ENCODE measurements at regions of chr1 and their contacts with region 1.

Region 1: GRCh38 chr1:223748773-223749733 is 36.7 kb downstream of the CAPN2 start:
- DNase-seq: peak; percentile 65
- ATAC-seq: peak; percentile 87
- H3K4me3 Mint-ChIP-seq: peak overlapping the region; percentile 56
- H3K27ac Mint-ChIP-seq: no peak overlapping the region
- H3K4me1 Mint-ChIP-seq: peaks cover 15% of the 10 kb centered on the region
- H3K27me3 Mint-ChIP-seq: no peaks in the 10 kb centered on the region

Region 2: DNA sequence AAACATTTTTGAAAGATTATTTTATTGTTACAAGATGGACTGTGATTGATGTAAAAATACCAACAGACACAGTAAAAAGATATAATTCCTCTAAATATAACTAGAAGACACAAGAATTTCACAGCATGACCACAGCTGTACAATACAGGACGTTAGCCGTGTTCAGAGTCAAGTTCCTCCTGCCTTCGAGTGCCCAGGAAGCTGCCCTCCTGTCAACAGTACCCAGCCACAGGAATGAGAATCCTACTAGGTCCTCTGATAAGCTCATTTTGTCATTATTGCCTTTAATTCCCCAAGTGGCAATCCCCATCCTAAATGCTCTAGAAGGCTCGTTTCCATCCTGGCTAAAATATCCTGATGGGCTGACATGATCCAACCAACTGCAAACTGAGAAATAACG is 53.1 kb before region 1 on chr1:
- CTCF ChIA-PET with region 1: interaction called, 99 read pairs
- POLR2A ChIA-PET with region 1: interaction called, 3 read pairs
- DNase-seq: no peak
- ATAC-seq: no peak
- H3K4me3 Mint-ChIP-seq: no peak overlapping the region
- H3K27ac Mint-ChIP-seq: no peak overlapping the region
- H3K4me1 Mint-ChIP-seq: peaks cover 4% of the 10 kb centered on the region
- H3K27me3 Mint-ChIP-seq: peaks cover 2% of the 10 kb centered on the region

Region 3: DNA sequence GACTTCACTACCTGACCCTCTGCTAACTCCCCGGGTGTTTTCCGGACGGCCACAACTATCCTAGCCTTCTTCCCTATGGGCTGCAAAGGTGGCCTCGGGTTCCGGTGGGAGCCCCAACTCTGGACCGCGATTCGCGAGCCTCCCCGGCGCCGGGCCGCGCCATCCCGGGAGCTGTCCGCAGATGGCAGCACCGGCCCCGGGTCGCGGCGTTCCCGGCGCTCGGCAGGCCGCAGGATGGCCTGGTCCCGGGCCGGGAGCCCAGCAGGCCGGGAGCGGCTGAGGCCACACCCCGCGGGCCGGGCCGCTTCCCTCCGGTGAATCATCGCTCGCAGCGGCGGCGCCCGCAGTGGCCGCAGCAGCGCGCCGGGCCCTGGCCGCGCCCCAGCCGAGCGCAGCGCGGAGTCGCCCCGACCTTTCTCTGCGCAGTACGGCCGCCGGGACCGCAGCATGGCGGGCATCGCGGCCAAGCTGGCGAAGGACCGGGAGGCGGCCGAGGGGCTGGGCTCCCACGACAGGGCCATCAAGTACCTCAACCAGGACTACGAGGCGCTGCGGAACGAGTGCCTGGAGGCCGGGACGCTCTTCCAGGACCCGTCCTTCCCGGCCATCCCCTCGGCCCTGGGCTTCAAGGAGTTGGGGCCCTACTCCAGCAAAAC is 36.7 kb before region 1 on chr1 and contains the start of gene CAPN2:
- CTCF ChIA-PET with region 1: interaction called, 58 read pairs
- POLR2A ChIA-PET with region 1: interaction called, 8 read pairs
- DNase-seq: peak; percentile 65
- ATAC-seq: peak; percentile 63
- H3K4me3 Mint-ChIP-seq: peak within 1 kb of the TSS; percentile 80
- H3K27ac Mint-ChIP-seq: peak within 1 kb of the TSS; percentile 88
- H3K4me1 Mint-ChIP-seq: peaks cover 51% of the 10 kb centered on the region
- H3K27me3 Mint-ChIP-seq: no peaks in the 10 kb centered on the region
- total RNA-seq, gene CAPN2: 176 to 178 TPM

Region 4: GRCh38 chr1:223732992-223733798 is 15.9 kb before region 1 on chr1:
- CTCF ChIA-PET with region 1: interaction called, 52 read pairs
- POLR2A ChIA-PET with region 1: interaction called, 4 read pairs
- DNase-seq: no peak
- ATAC-seq: no peak
- H3K4me3 Mint-ChIP-seq: no peak overlapping the region
- H3K27ac Mint-ChIP-seq: no peak overlapping the region
- H3K4me1 Mint-ChIP-seq: peaks cover 30% of the 10 kb centered on the region
- H3K27me3 Mint-ChIP-seq: no peaks in the 10 kb centered on the region

Region 5: GRCh38 chr1:223759273-223759672 is 10.2 kb after region 1 on chr1:
- CTCF ChIA-PET with region 1: interaction called, 13 read pairs
- POLR2A ChIA-PET with region 1: no interaction called
- DNase-seq: no peak
- ATAC-seq: no peak
- H3K4me3 Mint-ChIP-seq: no peak overlapping the region
- H3K27ac Mint-ChIP-seq: no peak overlapping the region
- H3K4me1 Mint-ChIP-seq: no peaks in the 10 kb centered on the region
- H3K27me3 Mint-ChIP-seq: no peaks in the 10 kb centered on the region

Measured in activated CD8-positive, alpha-beta T cell treated with anti-CD3 and anti-CD28 coated beads, Interleukin-2, amount 10 ng/mL, durations not matched to agents 7 days and 5 days (primary cell).